Left lung (tissue), 14 donors: ENCODE measurements at regions of chr4 and their contacts with region 1.

Region 1: GRCh38 chr4:122930862-122931261 is 8.5 kb upstream of the NUDT6 start:
- DNase-seq: peak in 1 of 4 donors; percentile 3
- ATAC-seq: peak; percentile 38
- H3K4me3 ChIP-seq: no peak overlapping the region
- H3K27ac ChIP-seq: no peak overlapping the region
- H3K4me1 ChIP-seq: no peaks in the 10 kb centered on the region
- H3K27me3 ChIP-seq: no peaks in the 10 kb centered on the region
- CTCF ChIP-seq: peak in 1 of 2 donors; percentile 46

Region 2: GRCh38 chr4:122758033-122758432 is 172.8 kb before region 1 on chr4:
- intact Hi-C with region 1: loop called in 1 of 2 experiments (anchors 5 kb)
- DNase-seq: peak in 2 of 4 donors; percentile 26 to 35
- ATAC-seq: peak; percentile 66
- H3K4me3 ChIP-seq: no peak overlapping the region
- H3K27ac ChIP-seq: no peak overlapping the region
- H3K4me1 ChIP-seq: peaks cover 0 to 3% of the 10 kb centered on the region in 2 donors
- H3K27me3 ChIP-seq: no peaks in the 10 kb centered on the region
- CTCF ChIP-seq: peak; percentile 57 to 59

Region 3: GRCh38 chr4:123064390-123064789 is 133.5 kb after region 1 on chr4:
- intact Hi-C with region 1: no loop called
- DNase-seq: no peak
- ATAC-seq: no peak
- H3K4me3 ChIP-seq: no peak overlapping the region
- H3K27ac ChIP-seq: no peak overlapping the region
- H3K4me1 ChIP-seq: no peaks in the 10 kb centered on the region
- H3K27me3 ChIP-seq: no peaks in the 10 kb centered on the region
- CTCF ChIP-seq: no peak

Region 4: DNA sequence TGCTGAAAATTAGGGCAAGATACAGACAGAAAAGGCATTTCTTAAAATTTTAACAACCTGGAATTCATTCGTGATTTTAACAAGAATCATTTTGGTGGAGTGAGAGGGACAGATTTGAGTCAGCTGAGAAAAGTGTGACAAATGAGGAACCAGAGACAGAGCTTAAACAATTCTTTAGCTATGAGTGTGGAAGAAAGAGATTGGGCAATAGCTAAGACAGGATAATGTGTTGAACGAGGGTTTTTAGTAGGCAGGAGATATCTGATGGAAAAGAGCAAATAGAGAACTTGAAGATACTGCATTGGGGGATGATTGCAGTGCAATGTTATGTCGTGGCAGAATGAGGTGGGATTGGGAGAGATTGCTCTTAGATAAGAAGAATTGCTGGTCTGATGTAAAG is 301.6 kb after region 1 on chr4:
- intact Hi-C with region 1: no loop called
- DNase-seq: no peak
- ATAC-seq: peak; percentile 54
- H3K4me3 ChIP-seq: no peak overlapping the region
- H3K27ac ChIP-seq: no peak overlapping the region
- H3K4me1 ChIP-seq: peaks cover 12 to 23% of the 10 kb centered on the region in 2 donors
- H3K27me3 ChIP-seq: no peaks in the 10 kb centered on the region
- CTCF ChIP-seq: no peak